Aorta (tissue), 5 donors: ENCODE measurements at regions of chr5 and their contacts with region 1.

Region 1: DNA sequence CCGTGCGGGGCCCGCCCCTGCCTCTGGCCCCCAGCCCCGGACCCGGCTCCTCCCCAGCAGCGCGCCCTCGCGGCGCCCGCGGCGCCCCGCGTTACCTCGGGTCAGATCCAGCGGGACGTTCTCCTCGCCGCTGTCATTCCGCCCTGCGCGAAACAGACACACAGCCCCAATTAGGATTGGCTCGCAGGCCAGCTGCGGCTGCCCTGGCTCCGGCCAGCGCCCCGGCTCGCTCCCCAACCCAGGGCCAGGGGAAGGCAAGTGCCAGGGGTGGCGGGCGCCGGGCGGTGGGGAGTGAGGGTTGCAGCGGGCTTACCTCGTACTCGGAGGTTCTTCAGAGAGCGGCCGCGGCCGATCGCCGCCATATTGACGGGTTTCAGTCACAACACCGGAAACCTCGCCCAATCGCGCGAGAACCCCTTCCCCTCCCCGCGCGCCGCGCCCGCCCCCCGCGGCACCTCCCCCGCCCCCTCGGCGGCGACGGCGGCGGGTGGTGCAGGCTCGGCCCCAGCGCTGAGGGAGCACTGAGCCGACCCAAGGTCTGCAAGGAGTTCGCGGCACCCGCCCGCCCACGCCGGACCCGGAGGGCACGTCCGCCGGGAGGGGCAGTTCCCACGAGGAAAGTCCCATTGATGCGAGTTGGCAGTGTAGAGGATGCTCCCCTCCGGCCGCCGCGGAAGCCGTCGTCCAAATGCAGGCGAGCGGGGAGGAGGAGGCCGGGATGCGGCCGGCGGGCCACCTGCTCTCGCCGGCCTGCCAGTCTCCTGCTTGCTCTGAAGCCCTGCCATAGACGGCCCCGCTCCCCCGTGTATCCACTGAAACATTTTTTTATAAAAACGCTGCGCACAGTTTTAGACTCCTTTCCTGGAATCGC is at the start of gene RICTOR:
- DNase-seq: peak; percentile 95 to 98
- ATAC-seq: peak; percentile 97
- H3K4me3 ChIP-seq: peak within 1 kb of the TSS; percentile 88 to 89
- H3K27ac ChIP-seq: peak within 1 kb of the TSS; percentile 62 to 98
- H3K4me1 ChIP-seq: no peaks in the 10 kb centered on the region
- H3K27me3 ChIP-seq: no peaks in the 10 kb centered on the region
- total RNA-seq, gene RICTOR: 57.1 to 69.5 TPM

Region 2: DNA sequence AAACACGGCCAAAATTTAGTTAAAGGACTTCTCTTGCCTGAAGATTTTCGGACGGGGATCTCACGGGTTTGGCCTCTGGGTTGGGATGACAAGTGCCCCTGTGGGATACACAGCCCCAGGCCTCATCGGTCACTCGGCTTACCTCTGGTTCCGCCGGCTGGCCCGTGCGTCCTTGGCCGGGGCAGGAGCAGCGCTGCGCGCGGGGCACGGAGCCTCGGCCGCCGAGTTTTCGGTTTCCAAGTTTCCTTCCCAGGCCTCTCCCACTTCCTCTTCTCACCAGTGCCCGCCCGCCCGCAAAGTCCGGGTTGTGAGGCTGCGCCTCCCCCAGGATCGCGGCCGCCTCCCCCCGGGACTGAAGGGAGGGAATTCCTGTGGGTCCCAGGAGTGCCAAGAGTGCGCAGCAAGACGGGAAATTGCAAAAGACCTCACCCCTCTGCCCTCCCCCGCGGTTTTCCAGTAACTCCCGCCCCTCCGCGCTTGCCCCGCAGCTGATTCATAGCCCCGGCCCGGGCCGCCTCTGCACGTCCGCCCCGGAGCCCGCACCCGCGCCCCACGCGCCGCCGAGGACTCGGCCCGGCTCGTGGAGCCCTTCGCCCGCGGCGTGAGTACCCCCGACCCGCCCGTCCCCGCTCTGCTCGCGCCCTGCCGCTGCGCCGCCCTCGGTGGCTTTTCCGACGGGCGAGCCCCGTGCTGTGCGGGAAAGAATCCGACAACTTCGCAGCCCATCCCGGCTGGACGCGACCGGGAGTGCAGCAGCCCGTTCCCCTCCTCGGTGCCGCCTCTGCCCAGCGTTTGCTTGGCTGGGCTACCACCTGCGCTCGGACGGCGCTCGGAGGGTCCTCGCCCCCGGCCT is 228.5 kb before region 1 on chr5 and contains the start of gene OSMR:
- intact Hi-C with region 1: loop called in 1 of 2 experiments (anchors 5 kb)
- DNase-seq: peak; percentile 97 to 98
- ATAC-seq: peak; percentile 96
- H3K4me3 ChIP-seq: peak within 1 kb of the TSS; percentile 81 to 91
- H3K27ac ChIP-seq: peak within 1 kb of the TSS; percentile 92 to 95
- H3K4me1 ChIP-seq: peaks cover 0 to 8% of the 10 kb centered on the region in 2 donors
- H3K27me3 ChIP-seq: no peaks in the 10 kb centered on the region
- total RNA-seq, gene OSMR: 150 to 164 TPM

Region 3: DNA sequence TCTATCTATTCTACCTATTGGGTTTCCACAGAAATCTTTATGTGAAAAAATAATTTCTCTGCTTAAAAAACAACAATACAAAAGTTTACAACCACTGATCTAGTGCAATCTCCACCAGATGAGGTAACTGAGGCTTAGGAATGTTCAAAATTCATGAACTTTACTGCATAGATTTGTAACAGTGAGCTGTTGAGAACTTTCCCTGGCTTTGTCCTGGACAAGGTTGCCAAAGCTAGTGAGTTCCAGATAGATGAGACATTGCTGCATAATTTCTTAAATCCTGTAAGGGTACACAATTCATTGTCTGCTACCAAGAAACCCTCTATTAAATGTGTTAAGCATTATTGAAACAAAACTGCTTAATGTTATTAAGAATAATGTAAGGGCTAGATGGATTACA is 125.8 kb before region 1 on chr5:
- intact Hi-C with region 1: no loop called
- DNase-seq: no peak
- ATAC-seq: no peak
- H3K4me3 ChIP-seq: no peak overlapping the region
- H3K27ac ChIP-seq: no peak overlapping the region
- H3K4me1 ChIP-seq: no peaks in the 10 kb centered on the region
- H3K27me3 ChIP-seq: no peaks in the 10 kb centered on the region

Region 4: DNA sequence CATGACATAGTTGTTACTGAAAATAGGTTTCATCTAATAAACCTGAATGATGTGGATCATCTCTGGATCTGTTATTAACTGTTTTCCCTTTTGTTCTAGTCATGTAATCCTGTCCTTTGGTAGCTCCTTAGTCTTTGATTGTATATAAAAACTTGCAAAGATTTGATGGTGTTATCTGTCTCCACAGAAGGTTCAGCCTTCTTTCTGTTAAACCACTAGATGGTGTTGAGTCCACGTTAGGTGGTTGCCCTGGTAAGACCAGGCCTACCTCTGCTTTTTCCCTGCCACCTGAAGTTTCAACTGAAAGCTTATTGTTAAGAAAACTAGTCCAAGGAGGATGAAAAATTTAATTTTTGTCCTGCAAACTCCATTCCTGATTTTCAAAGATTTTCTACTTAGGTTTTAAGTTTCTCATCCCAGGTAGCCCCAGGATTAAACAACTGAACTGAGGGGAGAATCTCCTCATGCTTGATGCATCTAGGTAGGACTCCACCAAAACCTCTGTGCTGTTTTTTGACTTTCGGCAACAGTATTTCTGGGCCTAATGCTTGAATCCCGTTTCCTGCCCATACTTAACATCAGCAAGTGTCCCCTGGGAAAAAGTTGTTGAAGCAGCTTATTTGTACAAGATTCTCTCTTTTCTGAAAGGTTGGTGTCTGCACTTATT is 68.6 kb before region 1 on chr5:
- intact Hi-C with region 1: loop called in 1 of 2 experiments (anchors 5 kb)
- DNase-seq: no peak
- ATAC-seq: no peak
- H3K4me3 ChIP-seq: no peak overlapping the region
- H3K27ac ChIP-seq: no peak overlapping the region
- H3K4me1 ChIP-seq: no peaks in the 10 kb centered on the region
- H3K27me3 ChIP-seq: no peaks in the 10 kb centered on the region

Region 5: DNA sequence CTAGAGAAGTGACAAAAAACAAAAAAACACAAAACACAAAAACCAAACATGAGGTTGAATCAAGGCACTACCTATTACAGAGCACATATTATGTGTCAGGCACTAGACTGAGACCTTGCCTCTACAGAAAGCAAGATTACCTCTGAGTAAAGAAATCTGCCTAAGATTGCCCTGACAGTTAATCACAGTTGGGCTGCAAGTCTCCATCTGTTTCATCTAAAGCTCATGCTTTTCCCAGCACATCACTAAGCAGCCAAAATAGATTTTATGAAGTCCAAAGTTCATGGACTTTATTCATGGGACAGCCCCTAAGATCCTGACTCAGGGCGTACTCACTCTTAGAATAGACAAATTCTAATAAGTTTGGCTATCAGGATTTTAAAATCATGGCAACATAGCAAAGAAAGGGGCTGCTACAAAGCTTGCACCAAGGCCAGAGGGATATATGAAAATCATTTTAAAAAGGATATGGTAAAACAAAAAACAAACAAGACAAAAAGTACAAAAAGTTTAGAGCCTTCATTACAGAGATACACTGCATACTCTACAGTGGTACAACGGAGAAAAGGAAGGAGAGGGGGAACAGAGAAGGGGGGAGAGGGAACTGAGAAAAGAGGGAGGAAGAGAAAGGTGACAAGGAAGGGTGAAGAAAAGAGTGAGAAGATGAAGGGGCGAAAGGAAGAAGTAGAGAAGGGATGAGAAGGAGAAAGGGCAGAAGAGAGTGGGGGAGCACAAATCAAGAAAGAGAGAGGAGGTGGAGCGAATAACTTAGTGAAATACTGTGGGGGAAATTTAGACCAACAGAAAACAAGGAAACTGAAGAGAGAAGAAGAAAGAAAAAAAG is 58.3 kb before region 1 on chr5:
- intact Hi-C with region 1: loop called (anchors 5 kb)
- DNase-seq: no peak
- ATAC-seq: peak; percentile 79
- H3K4me3 ChIP-seq: no peak overlapping the region
- H3K27ac ChIP-seq: peak overlapping the region; percentile 65 to 96
- H3K4me1 ChIP-seq: no peaks in the 10 kb centered on the region
- H3K27me3 ChIP-seq: no peaks in the 10 kb centered on the region

Region 6: GRCh38 chr5:39691993-39692392 is 617.7 kb after region 1 on chr5:
- intact Hi-C with region 1: no loop called
- DNase-seq: no peak
- ATAC-seq: no peak
- H3K4me3 ChIP-seq: no peak overlapping the region
- H3K27ac ChIP-seq: no peak overlapping the region
- H3K4me1 ChIP-seq: no peaks in the 10 kb centered on the region
- H3K27me3 ChIP-seq: no peaks in the 10 kb centered on the region